CD4-positive, alpha-beta T cell (primary cell): ENCODE measurements at regions of chr9 and their contacts with region 1.

Region 1: GRCh38 chr9:89400403-89401116 is 82.3 kb downstream of the SECISBP2 start:
- DNase-seq: no peak
- ATAC-seq: no peak
- H3K4me3 ChIP-seq: no peak overlapping the region
- H3K4me3 Mint-ChIP-seq: no peak overlapping the region
- H3K27ac ChIP-seq: no peak overlapping the region
- H3K27ac Mint-ChIP-seq: peak overlapping the region; percentile 79
- H3K4me1 ChIP-seq: peaks cover 11% of the 10 kb centered on the region
- H3K4me1 Mint-ChIP-seq: peaks cover 17% of the 10 kb centered on the region
- H3K27me3 ChIP-seq: no peaks in the 10 kb centered on the region
- H3K27me3 Mint-ChIP-seq: no peaks in the 10 kb centered on the region
- CTCF ChIP-seq: no peak

Region 2: DNA sequence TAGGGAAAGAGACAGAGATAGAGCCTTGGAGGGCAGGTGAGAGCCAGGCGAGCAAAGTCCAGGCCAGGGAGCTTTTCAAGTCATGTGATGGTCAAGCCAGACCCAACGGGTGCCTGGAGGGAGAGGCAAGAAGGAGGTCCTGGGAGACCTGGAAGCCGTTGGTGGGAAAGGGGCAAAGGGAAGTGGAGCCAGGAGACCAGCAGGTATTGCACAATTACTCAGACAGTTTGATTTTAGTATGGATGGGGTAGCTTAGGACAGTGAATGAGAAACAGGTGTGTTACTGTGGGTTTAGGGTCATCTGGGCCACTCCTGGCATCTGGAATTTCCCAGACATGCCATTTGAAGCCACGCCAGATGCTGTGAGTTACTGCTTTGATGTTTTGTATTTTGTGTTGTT is 77.2 kb before region 1 on chr9:
- CTCF ChIA-PET with region 1: no interaction called
- POLR2A ChIA-PET with region 1: interaction called, 3 read pairs
- intact Hi-C with region 1: loop called in 1 of 2 experiments (anchors 5 kb)
- DNase-seq: no peak
- ATAC-seq: no peak
- H3K4me3 ChIP-seq: no peak overlapping the region
- H3K4me3 Mint-ChIP-seq: peak overlapping the region; percentile 13
- H3K27ac ChIP-seq: no peak overlapping the region
- H3K27ac Mint-ChIP-seq: peak overlapping the region; percentile 67
- H3K4me1 ChIP-seq: peaks cover 24% of the 10 kb centered on the region
- H3K4me1 Mint-ChIP-seq: peaks cover 69% of the 10 kb centered on the region
- H3K27me3 ChIP-seq: no peaks in the 10 kb centered on the region
- H3K27me3 Mint-ChIP-seq: no peaks in the 10 kb centered on the region
- CTCF ChIP-seq: no peak